ENCODE measurements at regions of chr2 and their contacts with region 1.

Region 1: DNA sequence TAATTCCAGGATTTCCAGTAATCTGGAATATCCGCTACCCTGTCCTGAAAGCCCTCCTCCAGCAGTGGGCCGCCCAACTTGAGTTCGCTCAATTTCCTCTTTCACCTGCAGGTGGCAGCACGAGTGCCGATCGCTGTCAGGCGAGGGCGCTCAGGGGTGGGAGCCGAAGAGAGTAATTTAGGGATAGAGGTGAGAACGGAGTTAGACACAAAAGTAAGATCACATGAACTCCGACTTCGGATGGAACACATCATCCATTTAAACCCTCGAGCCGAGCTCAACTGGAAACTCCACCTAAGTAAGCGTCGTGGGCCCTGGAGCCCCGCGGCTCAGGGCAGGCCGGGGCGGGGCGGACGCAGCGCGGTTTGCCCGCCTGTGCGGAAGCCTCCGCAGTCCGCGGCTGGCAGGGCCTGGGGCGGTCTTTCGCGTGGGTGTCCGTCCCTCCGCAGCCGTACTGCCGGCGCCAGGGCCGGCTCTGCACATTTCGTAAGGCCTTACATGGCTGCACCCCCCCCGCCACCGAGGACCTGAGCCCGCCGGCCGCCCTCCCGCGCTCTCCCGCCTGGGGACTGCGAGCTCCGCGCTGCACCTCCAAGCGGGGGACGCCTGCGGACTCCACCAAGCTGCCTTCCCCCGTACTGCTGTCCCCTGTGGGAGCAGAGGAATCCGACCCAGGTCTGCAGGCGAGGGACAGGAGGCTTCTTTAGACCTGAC is 61.2 kb downstream of the SEMA4F start:
- DNase-seq: peak; percentile 69 to 87
- ATAC-seq: peak; percentile 90 to 91 (median 90)
- H3K4me3 ChIP-seq: peak overlapping the region; percentile 38
- H3K4me3 Mint-ChIP-seq: peak overlapping the region; percentile 92
- H3K27ac ChIP-seq: no peak overlapping the region
- H3K27ac Mint-ChIP-seq: peak overlapping the region in 1 of 2 donors; percentile 55
- H3K4me1 ChIP-seq: peaks cover 5% of the 10 kb centered on the region
- H3K4me1 Mint-ChIP-seq: peaks cover 0 to 5% of the 10 kb centered on the region in 2 donors
- H3K27me3 ChIP-seq: peaks cover 6% of the 10 kb centered on the region
- H3K27me3 Mint-ChIP-seq: peaks cover 0 to 5% of the 10 kb centered on the region in 2 donors
- CTCF ChIP-seq: peak; percentile 95

Region 2: DNA sequence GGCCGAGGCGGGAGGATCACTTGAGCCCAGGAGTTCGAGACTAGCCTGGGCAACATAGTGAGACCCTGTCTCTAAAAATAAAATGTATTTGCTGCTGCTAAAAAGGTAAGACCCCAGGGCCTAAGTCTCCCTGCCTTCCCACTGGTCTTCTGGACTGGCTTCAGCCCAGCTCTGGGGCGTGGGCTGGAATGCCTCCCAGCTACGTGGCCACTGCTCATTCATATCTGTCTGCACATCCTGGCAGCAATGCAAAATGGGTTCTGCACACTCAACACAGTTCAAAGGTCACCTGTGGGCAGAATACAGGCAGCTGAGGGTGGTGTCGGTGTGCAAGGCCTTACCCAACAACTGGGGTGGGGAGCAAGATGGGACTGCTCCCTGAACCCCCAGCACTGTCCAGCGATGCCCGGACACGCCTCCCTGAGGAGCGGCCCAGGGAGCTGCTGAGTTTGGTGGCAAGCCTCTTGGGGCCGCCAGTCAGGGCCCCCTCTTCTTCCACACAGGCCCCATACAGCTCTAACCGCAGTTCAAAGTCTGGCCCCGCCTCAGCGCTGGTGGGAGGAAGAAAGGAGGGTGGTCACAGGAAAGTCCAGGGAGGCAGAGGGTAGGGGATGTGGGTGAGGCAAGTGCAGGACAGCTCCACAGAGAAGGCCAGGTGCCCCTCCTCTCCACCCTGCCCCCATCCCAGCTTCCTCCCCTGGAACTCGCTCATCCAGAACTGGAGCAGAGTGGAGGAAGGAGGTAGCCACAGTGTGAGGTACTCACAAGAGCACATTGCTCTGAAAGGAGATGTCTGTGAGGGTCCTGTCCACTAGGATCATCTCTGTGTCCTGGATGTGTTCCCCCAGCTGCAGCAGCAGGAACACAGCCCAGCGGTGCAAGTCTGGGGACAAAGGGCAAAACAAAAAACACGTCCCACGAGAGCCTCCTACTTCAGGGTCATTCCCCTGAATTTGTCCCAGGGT is 285.5 kb before region 1 on chr2:
- intact Hi-C with region 1: no loop called
- DNase-seq: no peak
- ATAC-seq: no peak
- H3K4me3 ChIP-seq: no peak overlapping the region
- H3K4me3 Mint-ChIP-seq: no peak overlapping the region
- H3K27ac ChIP-seq: no peak overlapping the region
- H3K27ac Mint-ChIP-seq: no peak overlapping the region
- H3K4me1 ChIP-seq: no peaks in the 10 kb centered on the region
- H3K4me1 Mint-ChIP-seq: no peaks in the 10 kb centered on the region
- H3K27me3 ChIP-seq: no peaks in the 10 kb centered on the region
- H3K27me3 Mint-ChIP-seq: no peaks in the 10 kb centered on the region
- CTCF ChIP-seq: no peak

Region 3: GRCh38 chr2:75130171-75130570 is 414.9 kb after region 1 on chr2:
- intact Hi-C with region 1: no loop called
- DNase-seq: peak in 1 of 2 donors; percentile 3
- ATAC-seq: no peak
- H3K4me3 ChIP-seq: no peak overlapping the region
- H3K4me3 Mint-ChIP-seq: no peak overlapping the region
- H3K27ac ChIP-seq: no peak overlapping the region
- H3K27ac Mint-ChIP-seq: no peak overlapping the region
- H3K4me1 ChIP-seq: no peaks in the 10 kb centered on the region
- H3K4me1 Mint-ChIP-seq: no peaks in the 10 kb centered on the region
- H3K27me3 ChIP-seq: no peaks in the 10 kb centered on the region
- H3K27me3 Mint-ChIP-seq: peaks cover 0 to 10% of the 10 kb centered on the region in 2 donors
- CTCF ChIP-seq: no peak

Region 4: GRCh38 chr2:75403991-75404428 is 688.8 kb after region 1 on chr2:
- intact Hi-C with region 1: loop called (anchors 10 kb)
- DNase-seq: peak in 1 of 2 donors; percentile 64
- ATAC-seq: peak in 1 of 3 donors; percentile 70
- H3K4me3 ChIP-seq: no peak overlapping the region
- H3K4me3 Mint-ChIP-seq: no peak overlapping the region
- H3K27ac ChIP-seq: no peak overlapping the region
- H3K27ac Mint-ChIP-seq: no peak overlapping the region
- H3K4me1 ChIP-seq: no peaks in the 10 kb centered on the region
- H3K4me1 Mint-ChIP-seq: no peaks in the 10 kb centered on the region
- H3K27me3 ChIP-seq: no peaks in the 10 kb centered on the region
- H3K27me3 Mint-ChIP-seq: peaks cover 15 to 30% of the 10 kb centered on the region in 2 donors
- CTCF ChIP-seq: peak; percentile 82